Activated CD4-positive, alpha-beta T cell treated with anti-CD3 and anti-CD28 coated beads for 36 hours (primary cell): ENCODE measurements at regions of chr15 and their contacts with region 1.

Region 1: DNA sequence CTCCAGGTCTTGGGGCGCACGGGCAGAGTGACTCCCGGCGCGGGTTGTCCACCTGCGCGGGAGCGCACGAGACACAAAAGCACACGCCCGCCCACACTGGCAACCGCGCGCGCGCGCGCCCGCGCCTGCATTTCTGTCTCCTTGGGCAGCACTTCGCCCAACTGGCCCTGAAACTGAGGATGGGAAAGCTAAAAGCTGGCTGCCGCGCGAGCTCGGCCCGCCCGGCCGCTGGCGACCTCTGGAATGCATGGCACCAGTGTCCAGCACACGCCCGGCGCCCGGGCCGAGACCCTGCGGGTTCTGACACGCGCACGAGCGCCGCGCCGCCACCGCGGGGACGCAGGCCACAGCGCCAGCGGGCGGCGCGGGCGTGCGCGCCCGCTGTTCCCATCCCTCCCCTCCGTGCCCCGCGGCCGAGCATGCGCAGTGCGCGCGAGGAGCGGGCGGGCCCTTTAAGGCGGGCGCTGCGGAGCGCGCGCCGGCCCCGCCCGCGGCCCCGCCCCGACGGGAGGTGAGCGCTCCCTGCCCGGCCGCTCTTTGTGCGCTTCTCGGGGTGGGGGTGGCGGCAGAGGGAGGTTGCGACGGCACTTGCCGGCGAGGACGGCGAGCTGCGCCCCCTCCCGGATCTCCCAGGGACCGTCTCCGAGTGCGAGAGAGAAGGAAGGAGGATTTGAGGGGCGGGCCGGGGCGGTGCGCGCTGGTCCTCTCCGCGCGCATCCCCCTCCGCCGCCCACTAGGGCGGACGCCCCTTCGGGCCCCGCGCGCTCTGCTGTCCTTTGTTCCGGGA is 1.0 kb upstream of the MEX3B start:
- DNase-seq: peak; percentile 95
- ATAC-seq: peak; percentile 77
- H3K4me3 Mint-ChIP-seq: peak overlapping the region; percentile 81
- H3K27ac Mint-ChIP-seq: peak overlapping the region; percentile 85
- H3K4me1 Mint-ChIP-seq: peaks cover 12% of the 10 kb centered on the region
- H3K27me3 Mint-ChIP-seq: peaks cover 21% of the 10 kb centered on the region

Region 2: GRCh38 chr15:80152180-80152845 is 1894.5 kb before region 1 on chr15:
- CTCF ChIA-PET with region 1: no interaction called
- POLR2A ChIA-PET with region 1: no interaction called
- intact Hi-C with region 1: loop called in 1 of 2 experiments (anchors 10 kb)
- DNase-seq: peak; percentile 98
- ATAC-seq: peak; percentile 81
- H3K4me3 Mint-ChIP-seq: peak overlapping the region; percentile 77
- H3K27ac Mint-ChIP-seq: peak overlapping the region; percentile 76
- H3K4me1 Mint-ChIP-seq: peaks cover 27% of the 10 kb centered on the region
- H3K27me3 Mint-ChIP-seq: no peaks in the 10 kb centered on the region

Region 3: DNA sequence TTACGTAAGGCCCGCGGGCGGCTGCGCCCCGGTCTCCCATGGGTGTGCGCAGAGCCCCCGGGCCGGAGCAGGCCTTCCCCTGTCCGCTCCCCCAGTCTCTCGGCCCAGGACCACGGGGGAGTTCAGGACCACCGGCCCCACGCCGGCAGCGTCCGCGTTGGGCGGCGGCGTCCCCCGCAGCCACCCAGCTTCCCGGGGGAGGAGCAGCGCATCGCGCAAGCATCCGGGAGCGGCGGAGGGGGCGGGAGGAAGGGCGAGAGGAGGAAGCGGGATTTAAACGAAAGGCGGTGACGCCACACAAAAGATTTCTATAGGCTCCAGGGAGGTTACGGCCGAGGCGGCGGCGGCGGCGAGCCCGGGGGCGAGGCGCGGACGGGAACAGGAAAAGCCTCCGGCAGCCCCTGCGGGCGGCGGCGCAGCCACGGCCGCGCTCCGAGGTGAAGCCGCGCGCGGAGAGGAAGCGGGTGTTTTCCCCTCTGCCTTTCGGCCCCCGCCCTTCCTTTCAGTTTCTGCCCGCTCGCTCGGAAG is 1046.2 kb before region 1 on chr15 and contains the start of gene TLNRD1:
- CTCF ChIA-PET with region 1: no interaction called
- POLR2A ChIA-PET with region 1: no interaction called
- intact Hi-C with region 1: loop called in 1 of 2 experiments (anchors 2 kb)
- DNase-seq: peak; percentile 90
- ATAC-seq: peak; percentile 70
- H3K4me3 Mint-ChIP-seq: peak within 1 kb of the TSS; percentile 92
- H3K27ac Mint-ChIP-seq: peak within 1 kb of the TSS; percentile 92
- H3K4me1 Mint-ChIP-seq: peaks cover 45% of the 10 kb centered on the region
- H3K27me3 Mint-ChIP-seq: no peaks in the 10 kb centered on the region
- total RNA-seq, gene TLNRD1: 11.2 to 16.9 TPM

Region 4: DNA sequence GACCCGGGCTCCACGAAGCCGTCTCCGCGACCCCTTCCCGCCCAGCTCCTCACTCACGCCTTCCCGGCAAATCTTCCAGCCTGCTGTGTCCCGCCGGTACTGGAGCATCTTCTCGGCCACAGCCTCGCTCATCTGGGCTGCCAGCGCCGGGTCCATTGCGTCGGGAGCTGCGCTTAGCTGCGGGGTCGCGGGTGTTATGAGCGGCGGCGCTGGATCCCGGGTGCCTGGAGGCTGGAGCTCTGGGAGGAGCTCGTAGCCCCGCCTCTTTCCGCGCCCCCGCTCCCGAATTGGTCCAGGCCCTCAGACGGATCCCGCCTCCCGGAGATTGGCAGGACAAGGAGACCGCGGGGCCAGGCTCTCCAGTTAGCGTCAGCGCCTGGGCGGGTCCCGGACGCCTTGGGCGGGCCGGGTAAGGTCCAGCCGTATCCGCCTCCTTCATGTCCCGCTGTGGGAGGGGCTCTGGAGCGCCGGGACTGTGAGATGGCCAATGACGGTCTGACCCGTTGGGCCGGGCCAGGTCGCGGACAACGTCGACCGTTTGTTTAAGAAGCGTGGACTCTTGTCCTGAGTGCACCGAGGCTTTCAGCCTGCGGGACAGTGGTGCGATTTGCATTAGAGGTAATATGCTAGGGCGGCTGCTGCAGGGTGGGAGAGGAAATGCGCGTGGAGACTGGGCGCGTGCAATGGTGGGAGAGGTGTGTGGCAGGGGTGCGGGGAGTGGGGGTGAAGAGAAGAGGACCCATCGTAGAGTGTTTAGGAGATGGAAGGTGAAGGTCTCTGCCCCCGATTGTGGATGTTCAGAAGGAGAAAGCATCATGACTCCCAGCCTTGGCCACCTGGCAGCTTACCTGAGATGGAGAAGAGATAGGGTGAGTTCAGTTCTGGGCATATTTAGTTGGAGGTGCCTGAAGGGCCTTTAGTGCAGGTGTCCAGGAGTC is 722.6 kb before region 1 on chr15 and contains the start of gene STARD5:
- CTCF ChIA-PET with region 1: no interaction called
- POLR2A ChIA-PET with region 1: no interaction called
- intact Hi-C with region 1: loop called in 1 of 2 experiments (anchors 1 kb)
- DNase-seq: peak; percentile 98
- ATAC-seq: peak; percentile 99
- H3K4me3 Mint-ChIP-seq: peak within 1 kb of the TSS; percentile 95
- H3K27ac Mint-ChIP-seq: peak within 1 kb of the TSS; percentile 90
- H3K4me1 Mint-ChIP-seq: peaks cover 27% of the 10 kb centered on the region
- H3K27me3 Mint-ChIP-seq: no peaks in the 10 kb centered on the region
- total RNA-seq, gene STARD5: 8.9 to 9.2 TPM

Region 5: DNA sequence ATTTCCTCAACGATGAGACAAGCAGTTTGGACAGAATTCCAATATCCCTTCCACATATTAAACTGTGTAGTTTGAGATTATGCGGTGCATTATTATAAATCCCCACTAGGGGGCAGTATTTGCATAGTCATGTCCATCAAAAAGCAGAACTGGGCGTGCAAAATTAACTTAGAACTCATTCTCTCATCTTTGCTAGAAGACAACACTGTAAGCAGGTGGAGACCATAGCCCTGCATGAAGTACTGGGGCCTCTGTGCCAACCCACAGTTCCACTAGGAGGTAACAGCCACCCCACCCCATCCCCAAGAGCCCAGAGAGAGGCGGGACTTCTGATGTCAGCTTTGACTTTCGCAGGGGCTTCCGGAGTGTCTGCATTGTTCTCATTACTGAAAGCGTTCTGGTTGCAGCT is 566.2 kb before region 1 on chr15:
- CTCF ChIA-PET with region 1: no interaction called
- POLR2A ChIA-PET with region 1: no interaction called
- intact Hi-C with region 1: loop called (anchors 1 to 2 kb)
- DNase-seq: no peak
- ATAC-seq: peak; percentile 42
- H3K4me3 Mint-ChIP-seq: no peak overlapping the region
- H3K27ac Mint-ChIP-seq: no peak overlapping the region
- H3K4me1 Mint-ChIP-seq: no peaks in the 10 kb centered on the region
- H3K27me3 Mint-ChIP-seq: peaks cover 2% of the 10 kb centered on the region

Region 6: GRCh38 chr15:82262422-82263026 is 215.7 kb after region 1 on chr15 and contains the starts of genes EFL1 and SAXO2:
- CTCF ChIA-PET with region 1: no interaction called
- POLR2A ChIA-PET with region 1: no interaction called
- intact Hi-C with region 1: loop called (anchors 1 to 5 kb)
- DNase-seq: peak; percentile 94
- ATAC-seq: peak; percentile 91
- H3K4me3 Mint-ChIP-seq: peak within 1 kb of the TSS; percentile 89
- H3K27ac Mint-ChIP-seq: peak within 1 kb of the TSS; percentile 91
- H3K4me1 Mint-ChIP-seq: peaks cover 33% of the 10 kb centered on the region
- H3K27me3 Mint-ChIP-seq: no peaks in the 10 kb centered on the region
- total RNA-seq, gene EFL1: 25.0 to 30.2 TPM
- total RNA-seq, gene SAXO2: 4.4 to 6.9 TPM